Sigmoid colon (tissue), 7 donors: ENCODE measurements at regions of chr17 and their contacts with region 1.

Region 1: GRCh38 chr17:50686494-50687199 is 21.1 kb downstream of the ANKRD40 start:
- DNase-seq: peak; percentile 95
- H3K4me3 ChIP-seq: no peak overlapping the region
- H3K27ac ChIP-seq: peak overlapping the region; percentile 75 to 88 (median 80)
- H3K4me1 ChIP-seq: peaks cover 0 to 60% (median 44%) of the 10 kb centered on the region in 4 donors
- H3K27me3 ChIP-seq: no peaks in the 10 kb centered on the region
- CTCF ChIP-seq: no peak
- EP300 ChIP-seq: peak in 2 of 4 donors; percentile 10 to 48
- POLR2A ChIP-seq: no peak

Region 2: GRCh38 chr17:50626037-50626574 is 60.5 kb before region 1 on chr17:
- intact Hi-C with region 1: loop called (anchors 5 kb)
- DNase-seq: peak; percentile 90
- H3K4me3 ChIP-seq: no peak overlapping the region
- H3K27ac ChIP-seq: no peak overlapping the region
- H3K4me1 ChIP-seq: peaks cover 0 to 8% (median 4%) of the 10 kb centered on the region in 4 donors
- H3K27me3 ChIP-seq: peaks cover 0 to 43% (median 10%) of the 10 kb centered on the region in 3 donors
- CTCF ChIP-seq: peak; percentile 34 to 61 (median 54)
- EP300 ChIP-seq: no peak
- POLR2A ChIP-seq: no peak

Region 3: GRCh38 chr17:50707289-50708049 is 20.8 kb after region 1 on chr17 and contains the start of gene ANKRD40:
- intact Hi-C with region 1: loop called (anchors 2 kb)
- DNase-seq: peak; percentile 97
- H3K4me3 ChIP-seq: peak within 1 kb of the TSS; percentile 44 to 79 (median 74)
- H3K27ac ChIP-seq: peak within 1 kb of the TSS; percentile 92 to 97 (median 96)
- H3K4me1 ChIP-seq: peaks cover 0 to 64% (median 57%) of the 10 kb centered on the region in 4 donors
- H3K27me3 ChIP-seq: no peaks in the 10 kb centered on the region
- CTCF ChIP-seq: no peak
- EP300 ChIP-seq: peak in 2 of 4 donors; percentile 10 to 33
- POLR2A ChIP-seq: peak in 1 of 2 donors; percentile 41
- total RNA-seq, gene ANKRD40: 51.2 to 76.3 (median 63.7) TPM

Region 4: DNA sequence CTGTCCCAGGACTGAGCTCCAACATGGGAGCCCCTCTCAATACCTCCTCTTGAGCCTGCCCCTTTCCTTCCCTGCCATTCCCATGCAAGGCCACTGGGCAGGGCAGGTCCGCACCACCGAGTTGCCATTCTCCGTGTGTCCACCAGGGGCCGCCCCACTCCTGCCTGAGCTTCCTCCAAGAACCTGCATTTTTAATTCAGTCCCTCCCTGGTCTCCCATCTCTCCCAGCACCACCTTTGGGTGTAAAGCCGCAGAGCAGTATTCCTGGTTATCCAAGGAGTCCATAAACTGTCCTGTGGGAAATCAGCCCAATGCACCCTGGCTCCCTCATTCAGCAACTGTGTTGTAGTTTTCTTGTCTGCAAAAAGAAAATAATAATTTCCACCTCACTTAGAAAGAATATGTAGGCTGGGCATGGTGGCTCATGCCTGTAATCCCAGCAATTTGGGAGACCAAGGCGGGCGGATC is 96.6 kb after region 1 on chr17:
- intact Hi-C with region 1: no loop called
- DNase-seq: peak; percentile 91
- H3K4me3 ChIP-seq: no peak overlapping the region
- H3K27ac ChIP-seq: no peak overlapping the region
- H3K4me1 ChIP-seq: peaks cover 0 to 22% (median 17%) of the 10 kb centered on the region in 4 donors
- H3K27me3 ChIP-seq: peaks cover 0 to 3% (median 0%) of the 10 kb centered on the region in 3 donors
- CTCF ChIP-seq: peak; percentile 98 to 100 (median 100)
- EP300 ChIP-seq: no peak
- POLR2A ChIP-seq: no peak

Region 5: GRCh38 chr17:51064061-51064735 is 377.6 kb after region 1 on chr17:
- intact Hi-C with region 1: no loop called
- DNase-seq: no peak
- H3K4me3 ChIP-seq: no peak overlapping the region
- H3K27ac ChIP-seq: no peak overlapping the region
- H3K4me1 ChIP-seq: peaks cover 0 to 17% (median 0%) of the 10 kb centered on the region in 4 donors
- H3K27me3 ChIP-seq: no peaks in the 10 kb centered on the region
- CTCF ChIP-seq: no peak
- EP300 ChIP-seq: no peak
- POLR2A ChIP-seq: no peak